Adrenal gland (tissue), 19 donors: ENCODE measurements at regions of chr6 and their contacts with region 1.

Region 1: DNA sequence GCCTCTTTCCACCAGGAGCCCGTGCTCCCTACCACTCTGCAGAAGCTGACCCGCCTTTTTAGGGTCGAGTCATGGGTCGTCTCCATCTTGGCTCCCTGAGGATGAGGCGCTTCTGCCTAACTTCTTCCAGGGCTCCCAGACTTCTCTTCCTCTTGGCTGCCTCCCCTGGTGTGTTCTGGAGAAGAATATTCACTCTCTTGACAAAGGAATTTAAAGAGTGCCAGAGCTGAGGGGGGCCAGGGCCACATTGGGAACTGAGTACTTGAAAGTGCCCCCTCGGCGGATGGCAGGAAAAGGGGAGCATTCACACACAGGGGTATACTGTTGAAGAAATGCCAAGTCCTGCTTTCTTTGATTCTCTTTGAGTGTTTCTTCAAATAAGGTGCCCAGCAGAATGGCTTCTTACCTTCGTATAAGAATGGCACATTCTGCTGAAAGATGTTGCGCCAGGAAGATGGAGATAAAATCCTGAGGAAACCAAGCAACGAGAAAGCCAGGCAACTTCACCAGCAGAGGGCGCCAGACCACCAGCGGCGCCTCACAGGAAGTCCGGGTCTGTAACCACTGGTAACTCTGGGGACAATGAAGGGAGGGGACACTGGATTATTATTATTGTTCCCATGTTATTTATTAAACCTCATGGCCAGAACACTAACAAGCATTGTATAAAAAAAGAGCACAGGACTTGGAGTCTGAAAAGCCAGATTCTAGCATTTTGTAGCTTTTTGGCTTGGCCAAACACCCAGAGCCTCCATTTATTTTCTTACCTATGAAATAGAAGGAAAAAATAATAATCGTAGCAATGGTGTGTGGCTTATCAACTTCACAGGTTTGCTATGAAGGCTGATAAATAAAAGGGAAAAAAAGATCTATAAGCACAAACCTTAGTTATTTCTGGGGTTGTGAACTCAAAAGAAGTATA is 176.7 kb downstream of the HACE1 start:
- DNase-seq: peak; percentile 33 to 84 (median 55)
- H3K4me3 ChIP-seq: no peak overlapping the region
- H3K27ac ChIP-seq: no peak overlapping the region
- H3K4me1 ChIP-seq: no peaks in the 10 kb centered on the region
- H3K27me3 ChIP-seq: no peaks in the 10 kb centered on the region
- CTCF ChIP-seq: peak; percentile 35 to 77 (median 64)
- POLR2A ChIP-seq: no peak

Region 2: GRCh38 chr6:104768906-104769305 is 85.9 kb after region 1 on chr6:
- intact Hi-C with region 1: loop called in 1 of 2 experiments (anchors 5 kb)
- DNase-seq: no peak
- H3K4me3 ChIP-seq: no peak overlapping the region
- H3K27ac ChIP-seq: no peak overlapping the region
- H3K4me1 ChIP-seq: no peaks in the 10 kb centered on the region
- H3K27me3 ChIP-seq: no peaks in the 10 kb centered on the region
- CTCF ChIP-seq: no peak
- POLR2A ChIP-seq: no peak